HCT116 (cell line): ENCODE measurements at regions of chr1 and their contacts with region 1.

Region 1: DNA sequence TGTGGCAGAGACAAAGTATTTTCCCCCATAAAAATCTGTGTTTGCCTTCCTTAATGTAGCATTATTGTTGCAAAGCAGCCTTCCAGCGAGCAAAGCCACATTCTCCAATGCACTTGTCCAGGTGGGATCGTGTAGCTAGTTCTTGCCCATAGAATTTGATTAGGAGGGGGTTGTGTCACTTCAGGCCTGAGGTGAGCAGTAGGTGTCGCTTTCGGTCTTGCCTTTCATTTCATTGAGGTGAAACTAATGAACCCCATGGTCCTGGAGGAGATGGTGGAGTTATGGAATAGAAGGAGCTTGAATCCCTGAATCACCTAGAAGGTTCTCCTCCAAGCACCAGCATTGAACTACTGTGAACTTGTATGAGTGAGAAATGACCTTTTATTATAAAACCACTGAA is 318.9 kb upstream of the PBX1 start:
- DNase-seq: no peak
- ATAC-seq: no peak
- H3K4me3 ChIP-seq: no peak overlapping the region
- H3K27ac ChIP-seq: no peak overlapping the region
- H3K4me1 ChIP-seq: no peaks in the 10 kb centered on the region
- H3K27me3 ChIP-seq: no peaks in the 10 kb centered on the region
- CTCF ChIP-seq: no peak
- POLR2A ChIP-seq: no peak
- RAD21 ChIP-seq: peak; percentile 16; the same call in 1 of the 2 replicates

Region 2: GRCh38 chr1:164361927-164362326 is 121.8 kb after region 1 on chr1:
- CTCF ChIA-PET with region 1: no interaction called
- POLR2A ChIA-PET with region 1: no interaction called
- RAD21 ChIA-PET with region 1: no interaction called
- intact Hi-C with region 1: no loop called
- DNase-seq: no peak
- ATAC-seq: no peak
- H3K4me3 ChIP-seq: no peak overlapping the region
- H3K27ac ChIP-seq: no peak overlapping the region
- H3K4me1 ChIP-seq: no peaks in the 10 kb centered on the region
- H3K27me3 ChIP-seq: no peaks in the 10 kb centered on the region
- CTCF ChIP-seq: no peak
- POLR2A ChIP-seq: no peak
- RAD21 ChIP-seq: no peak

Region 3: DNA sequence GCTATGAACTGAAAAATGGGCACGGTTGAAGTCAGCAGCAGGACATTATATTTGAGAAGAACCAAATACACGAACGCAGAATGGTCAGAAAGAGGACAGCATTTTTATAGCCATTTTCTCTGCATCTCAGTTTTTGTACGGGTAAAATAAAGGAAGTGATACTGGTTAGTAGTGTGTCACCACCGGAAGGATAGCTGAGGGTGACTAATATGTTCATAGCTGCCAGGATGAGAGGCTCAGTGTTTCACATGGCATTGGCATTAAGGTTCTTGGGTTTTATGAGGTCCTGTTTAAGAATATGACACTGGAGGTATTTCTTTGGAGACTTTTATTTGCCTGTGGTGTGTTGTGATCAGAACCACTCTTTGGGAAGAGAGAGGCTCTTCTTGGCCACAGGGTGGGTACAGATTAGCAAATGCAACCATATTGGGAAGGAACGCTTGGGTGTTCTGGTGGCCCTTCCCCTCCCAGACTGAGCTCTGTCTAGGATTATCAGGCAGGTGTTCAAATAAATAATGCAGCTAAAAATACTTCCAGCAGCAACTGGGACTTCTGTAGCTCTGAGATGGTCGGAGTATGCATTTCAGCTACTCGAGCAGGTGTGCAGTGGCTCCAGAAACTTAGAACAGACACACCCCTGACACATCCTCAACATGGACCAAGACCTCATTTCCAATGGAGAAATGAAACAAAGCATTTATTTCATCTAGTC is 477.1 kb after region 1 on chr1:
- CTCF ChIA-PET with region 1: no interaction called
- POLR2A ChIA-PET with region 1: no interaction called
- RAD21 ChIA-PET with region 1: no interaction called
- intact Hi-C with region 1: no loop called
- DNase-seq: no peak
- ATAC-seq: no peak
- H3K4me3 ChIP-seq: no peak overlapping the region
- H3K27ac ChIP-seq: no peak overlapping the region
- H3K4me1 ChIP-seq: peaks cover 0 to 6% of the 10 kb centered on the region in 2 experiments; a peak in 1 of 4 replicates
- H3K27me3 ChIP-seq: no peaks in the 10 kb centered on the region
- CTCF ChIP-seq: no peak
- POLR2A ChIP-seq: no peak
- RAD21 ChIP-seq: no peak

Region 4: GRCh38 chr1:165452336-165453130 is 1212.5 kb after region 1 on chr1:
- CTCF ChIA-PET with region 1: no interaction called
- POLR2A ChIA-PET with region 1: no interaction called
- RAD21 ChIA-PET with region 1: no interaction called
- intact Hi-C with region 1: loop called (anchors 10 kb)
- DNase-seq: no peak
- ATAC-seq: no peak
- H3K4me3 ChIP-seq: no peak overlapping the region
- H3K27ac ChIP-seq: no peak overlapping the region
- H3K4me1 ChIP-seq: no peaks in the 10 kb centered on the region
- H3K27me3 ChIP-seq: peaks cover 38% of the 10 kb centered on the region
- CTCF ChIP-seq: no peak
- POLR2A ChIP-seq: no peak
- RAD21 ChIP-seq: no peak